Caco-2 (cell line): ENCODE measurements at regions of chr1 and their contacts with region 1.

Region 1: GRCh38 chr1:92858564-92859399 is 26.9 kb downstream of the RPL5 start:
- DNase-seq: peak; percentile 46 to 62
- H3K4me3 ChIP-seq: no peak overlapping the region
- H3K4me3 Mint-ChIP-seq: peak overlapping the region; percentile 10
- H3K27ac Mint-ChIP-seq: no peak overlapping the region
- H3K4me1 ChIP-seq: no peaks in the 10 kb centered on the region
- H3K4me1 Mint-ChIP-seq: peaks cover 14% of the 10 kb centered on the region
- H3K27me3 ChIP-seq: no peaks in the 10 kb centered on the region
- H3K27me3 Mint-ChIP-seq: no peaks in the 10 kb centered on the region
- CTCF ChIP-seq: peak; percentile 67 to 71

Region 2: GRCh38 chr1:92877081-92877711 is 18.4 kb after region 1 on chr1:
- CTCF ChIA-PET with region 1: no interaction called
- POLR2A ChIA-PET with region 1: no interaction called
- intact Hi-C with region 1: no loop called
- DNase-seq: no peak
- H3K4me3 ChIP-seq: no peak overlapping the region
- H3K4me3 Mint-ChIP-seq: no peak overlapping the region
- H3K27ac Mint-ChIP-seq: no peak overlapping the region
- H3K4me1 ChIP-seq: peaks cover 7% of the 10 kb centered on the region; the same call in 1 of the 2 replicates
- H3K4me1 Mint-ChIP-seq: peaks cover 7% of the 10 kb centered on the region
- H3K27me3 ChIP-seq: no peaks in the 10 kb centered on the region
- H3K27me3 Mint-ChIP-seq: no peaks in the 10 kb centered on the region
- CTCF ChIP-seq: no peak

Region 3: GRCh38 chr1:92901699-92902405 is 43.1 kb after region 1 on chr1:
- CTCF ChIA-PET with region 1: no interaction called
- POLR2A ChIA-PET with region 1: no interaction called
- intact Hi-C with region 1: loop called (anchors 2 kb)
- DNase-seq: no peak
- H3K4me3 ChIP-seq: no peak overlapping the region
- H3K4me3 Mint-ChIP-seq: no peak overlapping the region
- H3K27ac Mint-ChIP-seq: no peak overlapping the region
- H3K4me1 ChIP-seq: peaks cover 3% of the 10 kb centered on the region
- H3K4me1 Mint-ChIP-seq: peaks cover 7% of the 10 kb centered on the region
- H3K27me3 ChIP-seq: no peaks in the 10 kb centered on the region
- H3K27me3 Mint-ChIP-seq: no peaks in the 10 kb centered on the region
- CTCF ChIP-seq: no peak

Region 4: DNA sequence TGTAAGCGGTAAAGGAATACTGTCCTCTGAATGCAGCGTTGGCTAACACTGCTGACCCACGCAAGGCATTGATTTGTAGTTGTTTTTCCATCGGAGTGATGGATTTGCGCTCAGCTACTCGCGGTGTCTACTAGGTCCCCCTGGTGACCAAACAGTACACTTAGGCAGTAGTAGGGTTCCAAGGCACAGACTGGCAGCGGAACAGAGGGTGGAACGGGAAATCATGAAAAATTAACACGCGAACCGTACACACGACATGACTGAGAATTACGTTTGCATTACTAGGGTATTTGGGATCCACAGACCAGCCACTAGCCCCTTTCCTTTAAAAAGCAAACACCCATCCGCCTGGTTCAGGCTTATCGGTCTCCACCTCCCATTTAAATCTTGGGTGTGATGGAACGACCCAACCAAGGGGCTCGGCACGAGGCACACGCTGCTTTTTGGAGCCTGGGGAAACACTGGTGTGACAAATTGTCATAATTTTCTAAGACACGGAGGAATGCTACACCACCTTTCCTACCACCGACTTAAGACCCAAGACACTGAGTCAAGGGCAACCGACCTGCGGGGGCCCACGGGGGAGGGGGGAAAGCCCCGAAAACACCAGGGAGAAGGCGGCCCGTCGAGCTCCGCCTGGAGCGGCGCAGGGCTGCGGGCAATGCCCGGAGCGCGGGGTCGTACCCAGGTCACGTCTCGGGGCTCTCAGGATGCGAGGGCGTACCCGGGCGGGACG is 101.8 kb after region 1 on chr1:
- CTCF ChIA-PET with region 1: interaction called, 7 read pairs
- POLR2A ChIA-PET with region 1: interaction called, 3 read pairs
- intact Hi-C with region 1: loop called (anchors 1 kb)
- DNase-seq: peak; percentile 62 to 63
- H3K4me3 ChIP-seq: peak overlapping the region; percentile 78
- H3K4me3 Mint-ChIP-seq: peak overlapping the region; percentile 81
- H3K27ac Mint-ChIP-seq: peak overlapping the region; percentile 78
- H3K4me1 ChIP-seq: peaks cover 28% of the 10 kb centered on the region
- H3K4me1 Mint-ChIP-seq: peaks cover 18% of the 10 kb centered on the region
- H3K27me3 ChIP-seq: no peaks in the 10 kb centered on the region
- H3K27me3 Mint-ChIP-seq: no peaks in the 10 kb centered on the region
- CTCF ChIP-seq: peak; percentile 58 to 64

Region 5: DNA sequence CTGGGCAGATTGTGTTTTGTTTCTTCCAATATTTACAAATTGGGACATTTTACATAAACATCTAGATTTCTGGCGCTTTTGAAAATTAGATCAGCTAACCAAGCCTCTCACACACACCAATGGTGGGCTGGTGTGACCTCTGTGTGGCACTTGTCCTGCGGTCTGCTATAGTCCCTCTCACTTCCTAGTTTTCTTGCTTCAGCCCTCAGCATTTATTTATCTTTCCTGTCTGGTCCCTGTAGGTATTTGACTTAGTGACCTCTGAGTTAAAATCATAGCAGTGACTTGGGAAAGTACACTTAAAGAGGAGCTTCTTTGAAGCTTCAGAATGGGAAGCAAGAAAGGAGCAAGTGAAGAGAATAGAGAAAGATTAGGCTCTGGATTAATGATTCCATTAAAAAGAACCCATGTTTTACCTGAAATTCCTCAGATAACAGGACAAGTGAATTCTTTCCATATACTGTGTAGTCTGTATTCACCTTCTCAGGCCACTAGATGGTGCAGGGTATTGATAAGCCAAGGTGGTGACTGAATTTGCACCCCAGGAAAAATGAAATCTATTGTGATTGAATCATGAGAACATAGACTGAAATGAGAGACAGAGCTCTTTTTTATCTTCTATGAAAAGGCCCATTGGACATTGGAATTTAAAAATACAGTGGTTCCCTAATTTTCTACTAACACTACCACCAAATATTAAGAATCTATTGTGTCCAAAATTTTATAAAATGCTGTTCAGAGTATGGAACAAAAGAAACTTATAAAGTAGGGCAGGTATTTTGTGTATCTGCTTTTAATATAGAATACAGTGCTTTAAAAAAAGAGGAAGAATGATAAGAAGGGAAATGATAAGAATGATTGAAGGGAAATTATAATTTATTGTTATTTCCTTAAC is 109.6 kb after region 1 on chr1:
- CTCF ChIA-PET with region 1: no interaction called
- POLR2A ChIA-PET with region 1: no interaction called
- intact Hi-C with region 1: loop called (anchors 2 kb)
- DNase-seq: peak in 1 of 2 experiments; percentile 30
- H3K4me3 ChIP-seq: no peak overlapping the region
- H3K4me3 Mint-ChIP-seq: no peak overlapping the region
- H3K27ac Mint-ChIP-seq: peak overlapping the region; percentile 19
- H3K4me1 ChIP-seq: peaks cover 11% of the 10 kb centered on the region
- H3K4me1 Mint-ChIP-seq: peaks cover 8% of the 10 kb centered on the region
- H3K27me3 ChIP-seq: no peaks in the 10 kb centered on the region
- H3K27me3 Mint-ChIP-seq: no peaks in the 10 kb centered on the region
- CTCF ChIP-seq: peak; percentile 44 to 59

Region 6: DNA sequence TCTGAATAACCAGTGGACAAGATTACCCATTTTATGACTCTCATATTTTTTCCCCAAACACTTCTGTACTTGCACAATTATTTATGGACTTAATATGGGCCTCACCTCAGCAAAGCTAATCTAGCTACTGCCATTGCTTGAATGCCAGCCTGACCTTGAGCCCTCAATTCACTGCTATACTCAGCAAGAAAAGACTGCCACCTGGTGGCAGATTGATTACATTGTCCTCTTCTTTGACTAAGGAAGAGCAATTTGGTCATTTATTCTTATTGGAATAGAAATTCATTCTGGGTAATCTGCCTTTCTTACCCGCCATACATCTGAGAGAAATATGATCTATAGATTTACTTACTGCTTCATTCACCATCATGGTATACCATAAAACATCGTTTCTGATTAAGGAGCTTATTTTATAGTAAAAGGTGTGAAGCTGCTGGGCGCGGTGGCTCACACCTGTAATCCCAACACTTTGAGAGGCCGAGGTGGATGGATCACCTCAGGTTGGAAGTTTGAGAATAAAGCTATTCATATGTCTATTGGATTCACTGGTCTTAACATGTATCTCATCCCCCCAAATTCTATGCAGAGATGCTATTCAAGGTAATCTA is 135.4 kb after region 1 on chr1:
- CTCF ChIA-PET with region 1: interaction called, 14 read pairs
- POLR2A ChIA-PET with region 1: no interaction called
- intact Hi-C with region 1: loop called (anchors 1 kb)
- DNase-seq: peak; percentile 59 to 64
- H3K4me3 ChIP-seq: no peak overlapping the region
- H3K4me3 Mint-ChIP-seq: no peak overlapping the region
- H3K27ac Mint-ChIP-seq: no peak overlapping the region
- H3K4me1 ChIP-seq: 0 out of 2 replicates have a peak, but pooled peaks cover 3% of the 10 kb centered on the region
- H3K4me1 Mint-ChIP-seq: no peaks in the 10 kb centered on the region
- H3K27me3 ChIP-seq: no peaks in the 10 kb centered on the region
- H3K27me3 Mint-ChIP-seq: no peaks in the 10 kb centered on the region
- CTCF ChIP-seq: peak; percentile 40 to 51